A549 (cell line): ENCODE measurements at regions of chr3 and their contacts with region 1.

Region 1: GRCh38 chr3:43996379-43997301 is 245.0 kb upstream of the TOPAZ1 start:
- DNase-seq: peak; percentile 36 to 78
- ATAC-seq: peak; percentile 40 to 54
- H3K4me3 ChIP-seq: peak overlapping the region; percentile 83
- H3K27ac ChIP-seq: peak overlapping the region; percentile 89 to 99
- H3K4me1 ChIP-seq: peaks cover 22% of the 10 kb centered on the region
- CTCF ChIP-seq: peak; percentile 13; the same call in 1 of the 3 replicates
- EP300 ChIP-seq: no peak
- POLR2A ChIP-seq: peak; percentile 37
- RAD21 ChIP-seq: peak; percentile 19 to 40; a peak in 3 of 5 replicates

Region 2: DNA sequence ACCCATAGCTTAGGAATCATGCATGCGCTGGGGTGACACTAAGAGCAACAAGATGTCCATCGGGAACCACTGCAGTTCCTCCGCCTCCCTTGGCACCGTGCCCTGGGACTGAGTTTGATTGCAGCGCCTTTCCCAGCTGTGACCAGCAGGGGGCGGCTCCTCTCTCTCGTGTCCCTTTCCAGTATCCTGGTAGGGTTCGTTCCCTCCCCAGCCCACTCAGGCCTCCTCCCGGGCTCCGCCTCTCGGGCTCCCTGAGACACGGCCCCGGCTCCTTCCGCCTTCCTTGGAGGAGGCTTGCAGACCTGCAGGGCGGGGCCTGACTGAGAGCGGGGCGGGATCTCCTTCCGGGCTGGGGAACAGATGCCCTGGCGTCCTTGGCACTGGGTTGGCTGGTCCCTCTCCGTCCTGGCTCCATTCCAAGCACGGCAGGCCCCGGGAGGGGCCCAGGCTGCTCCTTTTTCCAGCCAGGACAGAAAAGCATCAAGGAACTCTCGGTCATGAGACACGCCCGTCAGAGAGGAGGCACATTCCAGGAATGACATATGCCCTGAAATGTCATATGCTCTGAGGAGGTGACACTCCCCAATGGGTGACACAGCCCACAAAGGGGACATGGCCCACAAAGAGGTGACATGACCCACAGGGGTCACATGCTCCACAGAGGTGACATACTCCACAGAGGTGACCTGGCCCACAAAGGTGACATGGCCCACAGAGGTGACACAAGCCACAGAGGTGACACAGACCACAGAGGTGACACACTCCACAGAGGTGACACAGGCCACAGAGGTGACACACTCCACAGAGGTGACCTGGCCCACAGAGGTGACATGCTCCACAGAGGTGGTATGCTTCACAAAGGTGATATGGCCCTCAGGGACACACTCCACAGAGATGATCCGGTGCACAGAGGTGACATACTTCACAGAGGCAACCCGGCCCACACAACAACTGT is 226.9 kb before region 1 on chr3:
- CTCF ChIA-PET with region 1: interaction called, 11 read pairs
- POLR2A ChIA-PET with region 1: interaction called, 3 read pairs
- DNase-seq: peak; percentile 87 to 97
- ATAC-seq: peak; percentile 97 to 99
- H3K4me3 ChIP-seq: peak overlapping the region; percentile 30; the same call in 2 of the 3 replicates
- H3K27ac ChIP-seq: peak overlapping the region; percentile 64 to 82
- H3K4me1 ChIP-seq: peaks cover 46% of the 10 kb centered on the region
- CTCF ChIP-seq: peak; percentile 77
- EP300 ChIP-seq: no peak
- POLR2A ChIP-seq: no peak
- RAD21 ChIP-seq: peak; percentile 80 to 90

Region 3: DNA sequence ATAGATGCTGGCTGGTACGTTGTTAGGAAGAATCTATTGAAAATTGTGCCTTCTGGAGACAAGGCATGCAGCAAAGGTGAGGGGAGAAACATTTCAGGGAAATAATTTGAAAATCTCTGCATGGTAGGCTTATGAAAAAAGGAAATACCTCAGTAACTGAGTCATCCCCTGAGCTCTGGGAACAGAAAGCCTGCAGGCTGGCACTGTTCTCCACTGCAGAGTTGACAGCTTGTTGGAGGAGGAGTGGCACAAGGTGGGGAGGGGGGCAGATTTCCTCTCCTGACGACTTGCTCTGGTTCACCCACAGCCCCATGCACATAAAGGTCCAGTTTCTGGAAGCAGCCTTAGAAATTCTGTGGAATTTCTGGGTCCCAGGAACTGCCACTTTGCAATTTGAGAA is 126.5 kb before region 1 on chr3:
- CTCF ChIA-PET with region 1: no interaction called
- POLR2A ChIA-PET with region 1: interaction called, 25 read pairs
- DNase-seq: peak; percentile 52 to 87
- ATAC-seq: peak; percentile 42 to 61; a peak in 5 of 6 replicates
- H3K4me3 ChIP-seq: no peak overlapping the region
- H3K27ac ChIP-seq: peak overlapping the region; percentile 93 to 98
- H3K4me1 ChIP-seq: peaks cover 94% of the 10 kb centered on the region
- CTCF ChIP-seq: no peak
- EP300 ChIP-seq: peak in 1 of 2 experiments; percentile 46; a peak in 1 of 5 replicates
- POLR2A ChIP-seq: no peak
- RAD21 ChIP-seq: no peak

Region 4: DNA sequence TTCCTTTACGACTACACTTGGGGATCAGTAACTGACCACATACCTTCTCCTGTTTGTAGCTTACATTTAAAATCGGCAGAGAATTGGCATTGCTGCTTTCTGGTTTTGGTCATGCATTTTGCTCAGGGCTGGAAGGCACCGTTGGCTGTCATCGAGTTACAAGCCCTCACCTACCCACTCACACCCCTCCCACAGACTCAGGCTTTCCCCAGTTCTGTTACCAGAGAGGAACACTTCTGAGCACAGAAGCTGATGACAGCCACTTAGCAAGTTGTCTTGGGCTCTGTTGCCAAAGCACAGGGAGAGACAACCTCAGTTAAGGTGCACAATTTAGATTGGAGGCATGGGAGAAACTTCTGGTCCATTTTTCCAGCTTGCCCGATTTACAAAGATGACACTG is 40.2 kb after region 1 on chr3:
- CTCF ChIA-PET with region 1: no interaction called
- POLR2A ChIA-PET with region 1: no interaction called
- DNase-seq: no peak
- ATAC-seq: no peak
- H3K4me3 ChIP-seq: no peak overlapping the region
- H3K27ac ChIP-seq: no peak overlapping the region
- H3K4me1 ChIP-seq: no peaks in the 10 kb centered on the region
- CTCF ChIP-seq: no peak
- EP300 ChIP-seq: no peak
- POLR2A ChIP-seq: no peak
- RAD21 ChIP-seq: no peak